MCF 10A (cell line): ENCODE measurements at regions of chr17 and their contacts with region 1.

Region 1: GRCh38 chr17:58417300-58418092 is at the start of gene RNF43:
- DNase-seq: peak; percentile 99
- H3K4me3 Mint-ChIP-seq: peak within 1 kb of the TSS; percentile 84
- H3K27ac Mint-ChIP-seq: peak within 1 kb of the TSS; percentile 95
- H3K4me1 Mint-ChIP-seq: peaks cover 30% of the 10 kb centered on the region
- H3K27me3 Mint-ChIP-seq: peaks cover 25% of the 10 kb centered on the region
- CTCF ChIP-seq: peak; percentile 75
- total RNA-seq, gene RNF43: 6.7 and 7.9 TPM in 2 replicates

Region 2: DNA sequence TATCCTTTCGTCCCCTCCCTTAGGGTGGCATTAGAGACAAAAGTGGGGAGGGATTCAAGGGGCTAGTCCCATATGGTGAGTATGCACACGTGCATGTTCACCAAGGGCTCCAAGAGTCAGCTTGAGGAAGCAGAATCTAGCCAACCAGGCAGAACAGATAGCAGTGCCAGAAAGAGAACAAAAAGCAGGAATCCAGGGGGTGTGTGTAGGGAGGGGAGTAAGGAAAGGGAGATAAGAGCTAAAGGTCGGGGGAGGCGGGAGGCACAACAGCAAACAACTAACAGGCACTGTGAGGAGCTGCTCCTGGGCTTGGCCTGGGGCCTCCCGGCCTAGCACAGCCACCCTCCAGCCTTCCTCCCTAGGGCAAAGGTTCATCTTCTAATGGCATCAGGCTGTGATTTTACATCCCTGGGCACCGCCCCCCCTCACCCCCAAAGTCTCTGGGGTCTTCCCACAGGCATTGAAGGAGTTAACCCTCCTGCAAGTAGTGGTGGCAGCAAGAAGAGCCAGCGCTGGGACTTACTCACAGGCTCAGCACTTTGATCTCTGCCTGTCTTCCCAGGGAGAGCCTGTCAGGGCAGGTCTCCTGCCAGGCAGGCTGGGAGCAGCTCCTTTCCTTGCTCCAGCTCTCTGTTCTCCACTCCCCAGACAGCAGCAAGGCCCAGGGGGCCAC is 53.1 kb before region 1 on chr17:
- CTCF ChIA-PET with region 1: interaction called, 10 read pairs
- POLR2A ChIA-PET with region 1: interaction called, 24 read pairs
- intact Hi-C with region 1: no loop called
- DNase-seq: peak; percentile 15
- H3K4me3 Mint-ChIP-seq: no peak overlapping the region
- H3K27ac Mint-ChIP-seq: no peak overlapping the region
- H3K4me1 Mint-ChIP-seq: peaks cover 8% of the 10 kb centered on the region
- H3K27me3 Mint-ChIP-seq: no peaks in the 10 kb centered on the region
- CTCF ChIP-seq: no peak

Region 3: GRCh38 chr17:58391302-58391984 is 26.1 kb before region 1 on chr17:
- CTCF ChIA-PET with region 1: interaction called, 6 read pairs
- POLR2A ChIA-PET with region 1: interaction called, 63 read pairs
- intact Hi-C with region 1: no loop called
- DNase-seq: peak; percentile 97
- H3K4me3 Mint-ChIP-seq: peak overlapping the region; percentile 2
- H3K27ac Mint-ChIP-seq: peak overlapping the region; percentile 59
- H3K4me1 Mint-ChIP-seq: peaks cover 40% of the 10 kb centered on the region
- H3K27me3 Mint-ChIP-seq: no peaks in the 10 kb centered on the region
- CTCF ChIP-seq: no peak

Region 4: GRCh38 chr17:58402047-58402446 is 15.4 kb before region 1 on chr17:
- CTCF ChIA-PET with region 1: interaction called, 8 read pairs
- POLR2A ChIA-PET with region 1: interaction called, 201 read pairs
- intact Hi-C with region 1: loop called (anchors 2 kb)
- DNase-seq: no peak
- H3K4me3 Mint-ChIP-seq: peak overlapping the region; percentile 38
- H3K27ac Mint-ChIP-seq: peak overlapping the region; percentile 89
- H3K4me1 Mint-ChIP-seq: peaks cover 37% of the 10 kb centered on the region
- H3K27me3 Mint-ChIP-seq: no peaks in the 10 kb centered on the region
- CTCF ChIP-seq: no peak

Region 5: GRCh38 chr17:58614859-58615459 is 197.5 kb after region 1 on chr17:
- CTCF ChIA-PET with region 1: no interaction called
- POLR2A ChIA-PET with region 1: no interaction called
- intact Hi-C with region 1: no loop called
- DNase-seq: no peak
- H3K4me3 Mint-ChIP-seq: no peak overlapping the region
- H3K27ac Mint-ChIP-seq: no peak overlapping the region
- H3K4me1 Mint-ChIP-seq: no peaks in the 10 kb centered on the region
- H3K27me3 Mint-ChIP-seq: no peaks in the 10 kb centered on the region
- CTCF ChIP-seq: no peak